ENCODE measurements at regions of chr4 and their contacts with region 1.

Region 1: GRCh38 chr4:98260579-98261290 is 449 bp upstream of the RAP1GDS1 start:
- DNase-seq: peak; percentile 97
- ATAC-seq: peak; percentile 89
- H3K4me3 Mint-ChIP-seq: peak overlapping the region; percentile 91
- H3K27ac Mint-ChIP-seq: peak overlapping the region; percentile 95
- H3K4me1 Mint-ChIP-seq: peaks cover 49% of the 10 kb centered on the region
- H3K27me3 Mint-ChIP-seq: no peaks in the 10 kb centered on the region

Region 2: DNA sequence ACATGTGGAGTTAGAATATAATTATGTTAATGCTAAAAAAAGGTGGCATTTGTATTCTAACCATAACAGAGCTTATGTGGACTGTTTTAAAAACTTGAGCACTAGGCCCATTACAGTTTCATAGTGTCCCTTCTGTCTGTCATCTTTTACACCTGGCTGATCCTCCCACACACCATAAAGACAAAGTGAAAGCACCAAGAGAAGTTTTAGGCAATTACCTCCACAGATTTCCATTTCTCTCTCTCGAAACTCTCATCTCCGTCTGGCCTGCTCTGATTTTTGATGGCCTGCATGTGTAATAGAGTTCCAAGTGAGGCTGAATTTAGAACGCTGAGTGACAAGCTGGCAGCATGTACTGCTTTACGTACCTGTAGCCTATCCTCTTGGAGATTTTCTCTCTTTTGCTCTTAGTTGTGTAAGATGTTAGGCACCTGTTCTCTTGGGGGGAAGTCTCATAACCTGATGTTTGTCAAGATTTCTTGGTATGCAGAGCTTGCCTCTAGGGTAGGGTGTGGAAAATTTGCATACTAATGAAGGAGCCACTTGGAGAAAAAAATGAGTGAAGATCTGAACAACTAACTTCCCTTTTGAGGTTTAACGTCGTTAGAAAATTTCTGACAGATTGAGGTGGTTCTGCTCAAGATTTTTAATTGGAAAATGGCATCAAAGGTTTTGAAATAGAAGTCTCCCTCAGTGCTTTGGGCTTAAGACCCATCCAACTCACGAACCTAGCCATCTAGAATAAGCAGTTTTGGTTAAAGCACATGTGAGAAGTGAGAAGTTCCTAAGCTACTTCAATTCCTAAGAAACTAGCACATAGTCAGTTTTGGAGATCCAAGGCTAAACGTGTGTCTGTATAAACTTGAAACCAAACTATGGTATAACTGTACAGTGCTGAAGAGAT is 57.2 kb before region 1 on chr4:
- CTCF ChIA-PET with region 1: no interaction called
- POLR2A ChIA-PET with region 1: no interaction called
- intact Hi-C with region 1: loop called in 1 of 2 experiments (anchors 5 kb)
- DNase-seq: peak; percentile 8
- ATAC-seq: peak; percentile 81
- H3K4me3 Mint-ChIP-seq: peak overlapping the region; percentile 49
- H3K27ac Mint-ChIP-seq: peak overlapping the region; percentile 81
- H3K4me1 Mint-ChIP-seq: peaks cover 16% of the 10 kb centered on the region
- H3K27me3 Mint-ChIP-seq: no peaks in the 10 kb centered on the region

Region 3: GRCh38 chr4:98377559-98377958 is 116.8 kb after region 1 on chr4:
- CTCF ChIA-PET with region 1: no interaction called
- POLR2A ChIA-PET with region 1: no interaction called
- intact Hi-C with region 1: loop called in 1 of 2 experiments (anchors 5 kb)
- DNase-seq: no peak
- ATAC-seq: peak; percentile 86
- H3K4me3 Mint-ChIP-seq: no peak overlapping the region
- H3K27ac Mint-ChIP-seq: no peak overlapping the region
- H3K4me1 Mint-ChIP-seq: peaks cover 11% of the 10 kb centered on the region
- H3K27me3 Mint-ChIP-seq: no peaks in the 10 kb centered on the region

Region 4: DNA sequence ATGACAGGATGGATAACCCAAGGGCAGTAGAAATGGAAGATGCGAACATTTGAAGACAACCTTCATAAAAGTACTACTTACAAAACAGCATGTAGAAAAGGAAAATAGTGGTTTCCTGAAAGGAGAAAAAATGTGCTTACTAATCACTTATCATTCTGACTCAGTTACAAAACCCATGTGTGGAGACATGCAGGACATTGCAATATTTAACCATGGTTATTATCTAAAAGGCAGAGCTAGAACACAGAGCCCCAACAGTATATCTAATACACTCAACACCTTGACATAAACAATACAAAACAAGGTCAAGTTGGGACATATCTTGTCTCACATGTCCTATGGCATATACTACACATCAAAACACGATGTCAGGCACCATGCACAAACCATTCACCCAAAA is 612.3 kb after region 1 on chr4:
- CTCF ChIA-PET with region 1: no interaction called
- POLR2A ChIA-PET with region 1: no interaction called
- intact Hi-C with region 1: no loop called
- DNase-seq: no peak
- ATAC-seq: no peak
- H3K4me3 Mint-ChIP-seq: no peak overlapping the region
- H3K27ac Mint-ChIP-seq: no peak overlapping the region
- H3K4me1 Mint-ChIP-seq: peaks cover 8% of the 10 kb centered on the region
- H3K27me3 Mint-ChIP-seq: no peaks in the 10 kb centered on the region

Region 5: GRCh38 chr4:98928505-98929340 is 668.0 kb after region 1 on chr4 and contains the start of gene EIF4E:
- CTCF ChIA-PET with region 1: no interaction called
- POLR2A ChIA-PET with region 1: no interaction called
- intact Hi-C with region 1: loop called (anchors 1 to 5 kb)
- DNase-seq: peak; percentile 98
- ATAC-seq: peak; percentile 80
- H3K4me3 Mint-ChIP-seq: peak within 1 kb of the TSS; percentile 92
- H3K27ac Mint-ChIP-seq: peak within 1 kb of the TSS; percentile 100
- H3K4me1 Mint-ChIP-seq: peaks cover 47% of the 10 kb centered on the region
- H3K27me3 Mint-ChIP-seq: no peaks in the 10 kb centered on the region
- total RNA-seq, gene EIF4E: 132 to 149 TPM

Region 6: GRCh38 chr4:99088481-99089365 is 828.0 kb after region 1 on chr4 and contains the start of gene ADH5:
- CTCF ChIA-PET with region 1: no interaction called
- POLR2A ChIA-PET with region 1: no interaction called
- intact Hi-C with region 1: loop called in 1 of 2 experiments (anchors 5 kb)
- DNase-seq: peak; percentile 96
- ATAC-seq: peak; percentile 97
- H3K4me3 Mint-ChIP-seq: peak within 1 kb of the TSS; percentile 98
- H3K27ac Mint-ChIP-seq: peak within 1 kb of the TSS; percentile 99
- H3K4me1 Mint-ChIP-seq: peaks cover 42% of the 10 kb centered on the region
- H3K27me3 Mint-ChIP-seq: no peaks in the 10 kb centered on the region
- total RNA-seq, gene ADH5: 81.3 to 119 TPM